Transverse colon (tissue), 4 donors: ENCODE measurements at regions of chr1 and their contacts with region 1.

Region 1: GRCh38 chr1:247131236-247131635 is 27.1 kb upstream of the ZNF669 start:
- DNase-seq: no peak
- H3K4me3 ChIP-seq: no peak overlapping the region
- H3K27ac ChIP-seq: no peak overlapping the region
- H3K4me1 ChIP-seq: peaks cover 0 to 5% (median 4%) of the 10 kb centered on the region in 4 donors
- H3K27me3 ChIP-seq: no peaks in the 10 kb centered on the region
- CTCF ChIP-seq: no peak
- EP300 ChIP-seq: no peak
- POLR2A ChIP-seq: no peak

Region 2: DNA sequence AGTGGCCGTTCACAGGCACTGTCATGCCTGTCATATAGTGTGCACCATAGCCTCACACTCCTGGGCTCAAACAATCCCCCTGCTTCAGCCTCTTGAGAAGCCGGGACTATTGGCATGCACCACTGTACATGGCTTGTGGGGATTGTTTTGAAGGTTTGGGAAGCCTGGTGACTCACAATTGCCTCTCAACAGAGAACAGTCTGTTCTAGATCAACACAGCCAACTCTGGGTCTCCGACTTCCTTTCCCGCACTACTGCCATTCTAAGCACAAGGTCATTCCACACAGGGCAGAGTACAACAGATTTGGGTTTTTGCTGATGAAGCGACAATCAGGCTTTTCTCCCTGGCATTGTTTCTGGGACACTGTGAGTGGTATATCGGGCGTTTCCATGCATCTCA is 184.0 kb before region 1 on chr1:
- in situ Hi-C with region 1: no loop called
- intact Hi-C with region 1: no loop called
- DNase-seq: peak; percentile 23
- H3K4me3 ChIP-seq: no peak overlapping the region
- H3K27ac ChIP-seq: peak overlapping the region; percentile 49 to 76 (median 68)
- H3K4me1 ChIP-seq: peaks cover 0 to 9% (median 3%) of the 10 kb centered on the region in 4 donors
- H3K27me3 ChIP-seq: no peaks in the 10 kb centered on the region
- CTCF ChIP-seq: no peak
- EP300 ChIP-seq: peak; percentile 74
- POLR2A ChIP-seq: no peak

Region 3: DNA sequence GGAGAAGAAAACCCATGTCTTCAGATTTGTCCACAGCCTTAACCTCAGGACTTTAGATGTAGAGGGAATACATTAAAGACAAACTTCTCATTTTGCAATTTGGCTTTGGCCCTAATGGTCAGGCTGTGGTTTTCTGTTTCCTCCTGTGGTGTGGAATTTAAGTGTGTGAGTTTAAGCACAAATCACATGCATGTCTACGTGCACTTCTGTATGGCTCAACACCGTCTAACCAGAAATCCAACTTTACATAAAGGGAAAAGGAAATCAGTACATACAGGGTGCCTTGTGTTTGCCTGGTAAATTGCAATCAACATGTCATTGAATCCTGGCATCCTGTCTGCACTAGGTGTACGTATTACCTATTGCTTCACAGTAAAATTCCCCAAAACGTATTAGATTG is 41.8 kb after region 1 on chr1:
- in situ Hi-C with region 1: no loop called
- intact Hi-C with region 1: loop called (anchors 5 kb)
- DNase-seq: no peak
- H3K4me3 ChIP-seq: no peak overlapping the region
- H3K27ac ChIP-seq: no peak overlapping the region
- H3K4me1 ChIP-seq: peaks cover 0 to 7% (median 2%) of the 10 kb centered on the region in 4 donors
- H3K27me3 ChIP-seq: no peaks in the 10 kb centered on the region
- CTCF ChIP-seq: no peak
- EP300 ChIP-seq: no peak
- POLR2A ChIP-seq: no peak